Adrenal gland (tissue), 19 donors: ENCODE measurements at regions of chr1 and their contacts with region 1.

Region 1: DNA sequence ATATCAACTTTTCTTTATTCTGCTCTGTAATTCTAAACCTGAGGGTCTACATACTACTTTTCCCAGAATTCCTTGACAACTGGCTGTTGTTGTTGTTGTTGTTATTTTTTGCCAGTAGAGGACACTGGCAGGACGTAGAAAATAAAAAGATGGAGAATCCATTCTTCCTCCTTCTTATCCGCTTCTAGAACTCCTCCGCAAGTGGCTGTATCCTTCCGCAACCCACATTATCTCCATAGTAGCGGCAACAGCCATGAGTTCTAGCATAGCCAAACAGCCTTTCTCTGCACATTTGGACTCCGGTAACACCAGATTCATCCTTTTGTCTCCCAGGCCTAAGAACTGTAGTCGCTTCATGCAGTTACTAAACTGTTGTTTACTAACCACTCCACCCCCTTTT is 91.1 kb upstream of the CACHD1 start:
- DNase-seq: peak in 5 of 7 donors; percentile 13 to 52 (median 36)
- H3K4me3 ChIP-seq: no peak overlapping the region
- H3K27ac ChIP-seq: no peak overlapping the region
- H3K4me1 ChIP-seq: no peaks in the 10 kb centered on the region
- H3K27me3 ChIP-seq: no peaks in the 10 kb centered on the region
- CTCF ChIP-seq: peak; percentile 26 to 69 (median 60)
- POLR2A ChIP-seq: no peak

Region 2: DNA sequence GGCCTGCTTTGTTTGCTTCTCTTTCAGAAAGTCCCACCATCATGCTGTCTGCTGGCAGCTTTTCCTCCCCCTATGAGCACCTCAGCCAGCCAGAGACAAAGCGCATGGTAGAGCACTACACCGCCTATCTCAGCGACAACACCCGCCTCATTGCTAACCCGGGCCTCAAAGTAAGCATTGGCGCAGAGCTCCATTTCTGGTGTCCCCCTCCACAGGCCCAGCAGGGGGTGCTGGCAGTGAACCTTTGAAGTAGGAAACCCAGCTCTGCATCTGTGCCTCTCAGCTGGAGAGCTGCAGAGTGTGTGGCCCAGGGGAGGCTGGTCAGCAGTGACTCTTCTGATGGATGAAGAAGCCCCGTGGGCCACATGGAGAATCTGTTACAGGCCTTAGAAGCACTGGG is 284.8 kb after region 1 on chr1:
- intact Hi-C with region 1: loop called in 1 of 2 experiments (anchors 10 kb)
- DNase-seq: peak in 1 of 7 donors; percentile 14
- H3K4me3 ChIP-seq: no peak overlapping the region
- H3K27ac ChIP-seq: no peak overlapping the region
- H3K4me1 ChIP-seq: no peaks in the 10 kb centered on the region
- H3K27me3 ChIP-seq: no peaks in the 10 kb centered on the region
- CTCF ChIP-seq: peak in 2 of 6 experiments; percentile 11 to 23
- POLR2A ChIP-seq: no peak

Region 3: GRCh38 chr1:64675718-64676345 is 297.0 kb after region 1 on chr1:
- intact Hi-C with region 1: loop called in 1 of 2 experiments (anchors 10 kb)
- DNase-seq: no peak
- H3K4me3 ChIP-seq: no peak overlapping the region
- H3K27ac ChIP-seq: no peak overlapping the region
- H3K4me1 ChIP-seq: no peaks in the 10 kb centered on the region
- H3K27me3 ChIP-seq: no peaks in the 10 kb centered on the region
- CTCF ChIP-seq: peak; percentile 27 to 67 (median 47)
- POLR2A ChIP-seq: no peak